HEK293T (cell line): ENCODE measurements at regions of chr6 and their contacts with region 1.

Region 1: GRCh38 chr6:111011360-111012142 is 29.7 kb downstream of the RPF2 start:
- DNase-seq: peak; percentile 69

Region 2: GRCh38 chr6:111041917-111042316 is 30.4 kb after region 1 on chr6:
- CTCF ChIA-PET with region 1: no interaction called
- POLR2A ChIA-PET with region 1: no interaction called
- DNase-seq: no peak

Region 3: GRCh38 chr6:111210194-111210728 is 198.7 kb after region 1 on chr6:
- CTCF ChIA-PET with region 1: interaction called, 13 read pairs
- POLR2A ChIA-PET with region 1: no interaction called
- DNase-seq: peak; percentile 71